Activated B cell treated with CpG ODN at 0.5 μM for 24 hours (primary cell): ENCODE measurements at regions of chr5 and their contacts with region 1.

Region 1: GRCh38 chr5:120457839-120458507 is 6.1 kb upstream of the PRR16 start:
- DNase-seq: peak; percentile 61
- ATAC-seq: peak; percentile 85
- H3K4me3 Mint-ChIP-seq: peak overlapping the region; percentile 85
- H3K27ac Mint-ChIP-seq: peak overlapping the region; percentile 84
- H3K4me1 Mint-ChIP-seq: peaks cover 13% of the 10 kb centered on the region
- H3K27me3 Mint-ChIP-seq: peaks cover 5% of the 10 kb centered on the region
- CTCF ChIP-seq: no peak

Region 2: DNA sequence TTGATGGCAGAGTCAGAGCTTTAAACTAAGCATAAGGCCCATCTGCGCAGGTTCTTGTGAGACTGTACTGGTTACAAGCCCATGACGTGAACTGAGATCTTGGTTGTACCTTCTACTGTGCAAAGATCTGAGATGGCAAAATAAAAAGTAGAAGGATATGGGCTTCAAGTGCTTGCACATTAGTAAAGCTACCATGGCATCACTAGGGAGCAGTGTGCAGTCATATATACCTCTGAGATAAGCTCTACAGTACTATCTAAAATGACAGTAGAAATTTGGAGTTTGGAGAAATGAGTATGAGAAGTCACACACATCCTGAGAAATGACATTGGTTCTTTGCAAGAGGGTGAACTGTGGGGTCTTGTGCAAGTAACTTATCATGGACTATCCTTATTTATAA is 402.1 kb before region 1 on chr5:
- CTCF ChIA-PET with region 1: no interaction called
- POLR2A ChIA-PET with region 1: no interaction called
- intact Hi-C with region 1: loop called (anchors 10 kb)
- DNase-seq: no peak
- ATAC-seq: no peak
- H3K4me3 Mint-ChIP-seq: no peak overlapping the region
- H3K27ac Mint-ChIP-seq: no peak overlapping the region
- H3K4me1 Mint-ChIP-seq: no peaks in the 10 kb centered on the region
- H3K27me3 Mint-ChIP-seq: no peaks in the 10 kb centered on the region
- CTCF ChIP-seq: no peak

Region 3: DNA sequence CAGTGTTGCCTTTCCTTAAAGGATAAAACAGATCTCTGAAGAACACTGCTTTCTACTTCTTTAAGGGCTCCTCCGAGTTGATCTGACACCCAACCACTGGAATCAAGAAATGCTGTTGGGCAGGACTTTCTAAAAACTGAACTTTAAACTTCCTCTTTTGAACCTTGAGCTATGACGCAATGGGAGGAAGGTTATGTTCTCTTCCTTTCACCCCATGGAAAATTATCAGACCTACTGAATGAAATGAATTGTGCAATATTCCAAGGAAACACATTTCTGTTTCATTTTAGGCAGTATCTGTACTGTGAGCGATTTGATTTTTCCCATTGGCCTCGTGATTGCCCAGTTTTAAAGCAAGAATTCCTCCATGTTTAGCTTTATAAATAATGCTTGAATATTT is 199.8 kb before region 1 on chr5:
- CTCF ChIA-PET with region 1: no interaction called
- POLR2A ChIA-PET with region 1: no interaction called
- intact Hi-C with region 1: no loop called
- DNase-seq: no peak
- ATAC-seq: no peak
- H3K4me3 Mint-ChIP-seq: no peak overlapping the region
- H3K27ac Mint-ChIP-seq: no peak overlapping the region
- H3K4me1 Mint-ChIP-seq: no peaks in the 10 kb centered on the region
- H3K27me3 Mint-ChIP-seq: no peaks in the 10 kb centered on the region
- CTCF ChIP-seq: no peak

Region 4: GRCh38 chr5:120516805-120517204 is 58.8 kb after region 1 on chr5:
- CTCF ChIA-PET with region 1: no interaction called
- POLR2A ChIA-PET with region 1: no interaction called
- intact Hi-C with region 1: no loop called
- DNase-seq: no peak
- ATAC-seq: no peak
- H3K4me3 Mint-ChIP-seq: no peak overlapping the region
- H3K27ac Mint-ChIP-seq: no peak overlapping the region
- H3K4me1 Mint-ChIP-seq: no peaks in the 10 kb centered on the region
- H3K27me3 Mint-ChIP-seq: no peaks in the 10 kb centered on the region
- CTCF ChIP-seq: no peak

Region 5: DNA sequence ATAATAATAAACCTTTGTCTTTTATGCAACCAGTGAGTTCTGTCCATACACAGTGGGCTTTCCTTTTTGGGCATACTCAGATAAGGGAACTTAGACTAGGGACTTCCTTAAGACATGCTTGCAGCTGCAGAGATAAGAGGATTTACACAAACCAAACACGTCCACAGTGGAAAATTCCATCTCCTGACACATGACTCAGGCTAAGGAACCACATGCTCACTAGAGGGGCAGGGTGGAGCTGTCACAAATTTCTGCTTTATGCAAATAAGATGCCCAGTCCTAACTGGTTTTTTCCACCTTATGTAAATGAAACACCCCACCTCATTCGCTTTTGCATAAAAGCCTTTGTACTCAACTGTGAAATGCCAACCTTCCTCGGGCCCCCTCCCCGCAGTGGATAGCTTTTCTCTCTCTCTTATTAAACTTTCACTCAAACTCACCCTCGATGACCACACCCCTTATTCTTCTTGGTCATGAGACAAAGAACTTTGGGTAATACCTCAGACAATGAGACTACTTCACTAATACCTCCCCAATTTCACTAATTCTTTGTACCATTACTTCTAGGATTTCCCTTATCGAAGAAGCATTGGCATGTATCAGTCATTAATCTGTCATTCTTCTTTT is 1223.4 kb after region 1 on chr5:
- CTCF ChIA-PET with region 1: no interaction called
- POLR2A ChIA-PET with region 1: no interaction called
- intact Hi-C with region 1: no loop called
- DNase-seq: no peak
- ATAC-seq: no peak
- H3K4me3 Mint-ChIP-seq: no peak overlapping the region
- H3K27ac Mint-ChIP-seq: no peak overlapping the region
- H3K4me1 Mint-ChIP-seq: no peaks in the 10 kb centered on the region
- H3K27me3 Mint-ChIP-seq: no peaks in the 10 kb centered on the region
- CTCF ChIP-seq: no peak